Activated naive CD4-positive, alpha-beta T cell treated with anti-CD3 and anti-CD28 coated beads, Interleukin-2, amount 10 ng/mL, durations not matched to agents 7 days and 5 days (primary cell): ENCODE measurements at regions of chr6 and their contacts with region 1.

Region 1: DNA sequence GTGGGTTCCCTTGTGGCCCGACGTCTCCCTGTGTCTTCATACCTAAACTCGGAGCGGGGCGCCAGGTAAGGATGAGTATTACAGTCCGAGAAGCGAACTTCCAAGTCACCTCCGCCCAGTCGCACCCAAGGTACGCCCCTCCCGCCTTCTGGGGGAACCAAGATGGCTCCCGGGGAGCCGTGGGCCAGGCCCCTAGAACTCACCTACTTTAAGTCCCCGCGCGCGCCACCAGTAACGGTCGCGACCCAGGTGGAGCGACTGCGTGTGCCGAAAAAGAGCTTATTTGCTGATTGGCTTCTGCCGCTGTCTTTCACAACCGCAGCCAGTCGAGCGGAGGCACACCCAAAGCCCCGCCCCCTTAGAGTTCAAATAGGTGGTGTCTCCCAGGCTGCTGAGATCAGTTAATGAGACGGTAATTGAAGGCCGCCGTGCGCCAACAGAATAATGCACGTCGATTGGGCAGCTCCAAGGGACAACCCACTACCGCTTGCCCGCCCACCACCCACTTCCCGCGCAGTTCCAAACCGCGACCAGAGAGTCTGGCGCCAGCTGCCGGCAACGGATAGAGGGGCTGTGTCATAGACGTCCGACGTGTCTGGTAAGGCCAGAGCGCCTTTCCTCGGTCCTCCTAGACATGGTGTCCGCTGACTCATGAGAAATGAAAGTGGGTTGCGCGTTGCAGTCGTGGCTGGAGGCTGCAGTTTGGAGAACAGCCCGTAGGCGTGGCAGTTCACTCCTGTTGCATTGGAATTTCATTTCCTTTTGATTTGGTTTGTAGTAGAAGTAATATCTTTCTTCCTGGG is at the start of gene MDC1:
- DNase-seq: peak; percentile 100
- H3K4me3 Mint-ChIP-seq: peak within 1 kb of the TSS; percentile 88
- H3K27ac Mint-ChIP-seq: peak within 1 kb of the TSS; percentile 97
- H3K4me1 Mint-ChIP-seq: peaks cover 63% of the 10 kb centered on the region
- H3K27me3 Mint-ChIP-seq: no peaks in the 10 kb centered on the region

Region 2: DNA sequence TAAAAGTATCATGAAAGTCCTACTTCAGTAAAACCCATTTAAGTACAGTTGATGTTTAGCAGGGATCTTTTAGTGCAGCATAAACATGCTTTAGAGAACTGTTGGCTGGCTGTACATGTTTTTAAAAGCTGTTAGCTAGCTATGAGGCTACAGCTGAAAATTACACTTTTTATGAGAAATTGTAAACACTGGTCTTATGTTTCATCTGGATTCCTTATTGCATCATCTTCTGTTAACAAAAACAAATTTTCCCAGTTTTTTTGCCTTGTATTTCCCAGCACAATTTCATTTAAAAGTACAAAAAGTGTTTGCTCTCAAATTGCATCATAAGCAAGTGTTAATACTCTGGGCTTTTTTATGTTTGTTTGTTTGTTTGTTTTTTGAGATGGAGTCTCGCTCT is 246.3 kb before region 1 on chr6:
- CTCF ChIA-PET with region 1: no interaction called
- DNase-seq: no peak
- H3K4me3 Mint-ChIP-seq: no peak overlapping the region
- H3K27ac Mint-ChIP-seq: no peak overlapping the region
- H3K4me1 Mint-ChIP-seq: peaks cover 8% of the 10 kb centered on the region
- H3K27me3 Mint-ChIP-seq: peaks cover 85% of the 10 kb centered on the region

Region 3: GRCh38 chr6:30678964-30679726 is 38.1 kb before region 1 on chr6:
- CTCF ChIA-PET with region 1: interaction called, 285 read pairs
- DNase-seq: peak; percentile 93
- H3K4me3 Mint-ChIP-seq: peak overlapping the region; percentile 99
- H3K27ac Mint-ChIP-seq: peak overlapping the region; percentile 80
- H3K4me1 Mint-ChIP-seq: peaks cover 40% of the 10 kb centered on the region
- H3K27me3 Mint-ChIP-seq: no peaks in the 10 kb centered on the region